WTC11 (cell line): ENCODE measurements at regions of chr20 and their contacts with region 1.

Region 1: DNA sequence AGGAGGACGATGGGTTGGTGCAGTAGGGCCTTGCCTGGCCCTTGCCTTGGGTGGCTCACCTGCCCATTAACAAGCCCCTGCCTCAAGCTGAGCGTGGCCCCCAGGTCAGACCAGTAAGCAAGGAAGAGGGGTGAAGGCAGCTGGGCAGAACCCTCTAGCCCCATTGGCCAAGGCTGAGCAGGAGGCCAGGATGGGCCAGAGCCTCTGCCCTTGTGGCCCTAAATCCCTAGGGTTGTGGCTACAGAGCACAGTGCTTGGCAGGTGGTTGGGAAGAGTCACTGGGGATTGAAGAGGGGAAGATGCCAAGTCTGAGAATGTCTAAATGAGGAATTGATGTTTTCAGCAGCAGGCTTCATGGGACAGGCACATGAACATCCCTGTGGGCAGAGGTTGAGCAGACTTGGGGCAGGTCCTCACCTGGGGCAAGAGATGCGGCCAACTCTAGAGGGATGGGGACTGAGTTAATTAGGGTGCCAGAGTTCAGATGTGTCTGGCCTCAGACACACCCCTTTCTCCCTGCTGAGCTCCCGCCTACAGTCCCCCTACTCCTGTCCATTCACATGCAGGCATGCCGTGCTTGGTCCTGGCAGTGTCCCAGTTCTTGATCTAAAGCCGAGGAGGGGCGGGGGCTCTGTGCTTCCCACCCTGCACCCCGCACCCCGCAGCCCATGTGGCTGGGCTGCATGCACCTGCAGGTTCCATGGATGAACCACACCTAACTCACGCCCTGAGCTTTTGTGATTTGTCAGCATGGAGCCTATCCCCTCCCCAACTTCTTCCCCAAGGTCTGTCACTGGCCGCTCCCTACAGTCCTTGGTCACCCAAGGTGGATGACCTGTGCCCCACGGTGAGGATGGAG is 9.8 kb downstream of the GTSF1L start:
- DNase-seq: no peak
- ATAC-seq: no peak
- H3K4me3 Mint-ChIP-seq: no peak overlapping the region
- H3K27ac Mint-ChIP-seq: 0 out of 2 replicates have a peak overlapping the region, but pooled peaks have one; percentile 15
- H3K4me1 Mint-ChIP-seq: peaks cover 13% of the 10 kb centered on the region
- H3K27me3 Mint-ChIP-seq: no peaks in the 10 kb centered on the region
- CTCF ChIP-seq: no peak

Region 2: GRCh38 chr20:43650997-43651525 is 65.9 kb before region 1 on chr20:
- CTCF ChIA-PET with region 1: no interaction called
- POLR2A ChIA-PET with region 1: interaction called, 12 read pairs
- DNase-seq: no peak
- ATAC-seq: no peak
- H3K4me3 Mint-ChIP-seq: no peak overlapping the region
- H3K27ac Mint-ChIP-seq: no peak overlapping the region
- H3K4me1 Mint-ChIP-seq: no peaks in the 10 kb centered on the region
- H3K27me3 Mint-ChIP-seq: no peaks in the 10 kb centered on the region
- CTCF ChIP-seq: no peak

Region 3: GRCh38 chr20:43666376-43667328 is 50.3 kb before region 1 on chr20 and contains the start of gene MYBL2:
- CTCF ChIA-PET with region 1: no interaction called
- POLR2A ChIA-PET with region 1: no interaction called
- DNase-seq: peak; percentile 78
- ATAC-seq: peak; percentile 88
- H3K4me3 Mint-ChIP-seq: peak within 1 kb of the TSS; percentile 83
- H3K27ac Mint-ChIP-seq: no peak within 1 kb of the TSS
- H3K4me1 Mint-ChIP-seq: peaks cover 4% of the 10 kb centered on the region
- H3K27me3 Mint-ChIP-seq: peaks cover 22% of the 10 kb centered on the region
- CTCF ChIP-seq: no peak
- total RNA-seq, gene MYBL2: 133 to 166 TPM (median 133 TPM) in 3 replicates

Region 4: GRCh38 chr20:43893930-43894329 is 176.9 kb after region 1 on chr20:
- CTCF ChIA-PET with region 1: no interaction called
- POLR2A ChIA-PET with region 1: no interaction called
- DNase-seq: no peak
- ATAC-seq: no peak
- H3K4me3 Mint-ChIP-seq: no peak overlapping the region
- H3K27ac Mint-ChIP-seq: no peak overlapping the region
- H3K4me1 Mint-ChIP-seq: peaks cover 36% of the 10 kb centered on the region
- H3K27me3 Mint-ChIP-seq: no peaks in the 10 kb centered on the region
- CTCF ChIP-seq: no peak

Region 5: DNA sequence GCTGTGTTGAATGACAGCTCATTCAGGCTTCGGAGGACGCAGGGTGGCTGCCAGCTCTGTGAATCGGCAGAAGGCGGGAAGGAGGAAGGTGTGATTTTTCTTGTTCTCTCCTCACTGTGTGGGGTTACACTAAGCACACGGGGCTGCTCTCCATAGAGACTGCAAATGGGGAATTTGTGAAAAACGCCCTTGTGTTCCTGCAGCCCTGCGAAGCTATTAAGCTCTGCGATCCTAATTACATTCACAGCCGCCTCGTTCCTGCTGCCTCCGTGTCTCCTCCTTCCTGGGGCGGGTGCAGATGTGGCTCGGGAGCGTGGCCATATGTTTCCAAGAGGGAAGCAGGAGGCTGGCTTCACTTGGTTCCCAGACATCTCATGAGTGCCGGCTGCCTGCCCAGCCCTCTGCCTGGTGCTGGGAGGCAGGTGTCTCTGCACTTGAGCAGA is 321.7 kb after region 1 on chr20:
- CTCF ChIA-PET with region 1: no interaction called
- POLR2A ChIA-PET with region 1: no interaction called
- DNase-seq: no peak
- ATAC-seq: no peak
- H3K4me3 Mint-ChIP-seq: no peak overlapping the region
- H3K27ac Mint-ChIP-seq: no peak overlapping the region
- H3K4me1 Mint-ChIP-seq: 0 out of 2 replicates have a peak, but pooled peaks cover 2% of the 10 kb centered on the region
- H3K27me3 Mint-ChIP-seq: peaks cover 2% of the 10 kb centered on the region; the same call in 1 of the 2 replicates
- CTCF ChIP-seq: no peak